Psoas muscle (tissue), 8 donors: ENCODE measurements at regions of chr1 and their contacts with region 1.

Region 1: GRCh38 chr1:40691538-40692428 is at the start of gene NFYC:
- DNase-seq: peak; percentile 97
- ATAC-seq: peak; percentile 95 to 97 (median 96)
- H3K4me3 ChIP-seq: peak within 1 kb of the TSS; percentile 68
- H3K27ac ChIP-seq: peak within 1 kb of the TSS; percentile 93
- H3K4me1 ChIP-seq: peaks cover 19% of the 10 kb centered on the region
- H3K27me3 ChIP-seq: no peaks in the 10 kb centered on the region
- CTCF ChIP-seq: no peak
- total RNA-seq, gene NFYC: 45.8 to 67.8 (median 61.1) TPM

Region 2: DNA sequence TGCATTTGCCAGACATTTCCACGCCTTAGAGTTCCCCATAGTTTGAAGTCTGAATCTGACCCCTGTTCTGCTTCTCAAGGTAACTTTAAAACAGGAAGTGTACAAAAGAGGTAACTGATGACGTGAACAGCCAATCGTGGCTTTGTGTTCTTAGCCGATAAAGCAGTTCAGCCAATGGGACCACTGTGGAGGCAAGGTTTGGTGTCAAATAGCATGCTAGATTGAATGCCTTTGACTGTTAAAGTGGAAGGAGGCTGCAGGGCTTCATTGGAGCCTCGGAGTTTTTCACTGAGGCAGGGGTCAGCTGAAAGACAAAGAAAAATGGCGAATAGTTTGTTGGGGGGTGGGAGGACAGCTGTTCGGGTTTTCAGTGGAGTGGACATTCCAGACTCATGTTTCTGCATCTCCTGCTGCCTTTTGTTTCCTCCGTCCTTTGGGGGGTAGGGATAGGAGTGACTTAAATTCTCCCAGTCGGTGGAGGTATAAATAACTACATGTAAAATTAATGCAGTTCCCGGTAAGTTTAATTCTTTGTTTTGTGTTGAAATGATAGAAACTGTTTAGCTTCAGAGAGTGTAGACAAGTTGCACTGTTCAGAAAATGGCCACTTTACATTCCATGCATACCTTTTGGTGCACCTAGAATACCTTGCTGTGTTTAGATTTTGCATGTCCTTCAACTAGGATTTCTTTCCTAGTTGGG is 17.5 kb after region 1 on chr1:
- intact Hi-C with region 1: loop called in 1 of 2 experiments (anchors 2 kb)
- DNase-seq: peak; percentile 55 to 63
- ATAC-seq: peak; percentile 92 to 95 (median 93)
- H3K4me3 ChIP-seq: peak overlapping the region; percentile 75
- H3K27ac ChIP-seq: peak overlapping the region; percentile 81
- H3K4me1 ChIP-seq: peaks cover 63% of the 10 kb centered on the region
- H3K27me3 ChIP-seq: no peaks in the 10 kb centered on the region
- CTCF ChIP-seq: no peak